Breast epithelium (tissue), 4 donors: ENCODE measurements at regions of chr9 and their contacts with region 1.

Region 1: DNA sequence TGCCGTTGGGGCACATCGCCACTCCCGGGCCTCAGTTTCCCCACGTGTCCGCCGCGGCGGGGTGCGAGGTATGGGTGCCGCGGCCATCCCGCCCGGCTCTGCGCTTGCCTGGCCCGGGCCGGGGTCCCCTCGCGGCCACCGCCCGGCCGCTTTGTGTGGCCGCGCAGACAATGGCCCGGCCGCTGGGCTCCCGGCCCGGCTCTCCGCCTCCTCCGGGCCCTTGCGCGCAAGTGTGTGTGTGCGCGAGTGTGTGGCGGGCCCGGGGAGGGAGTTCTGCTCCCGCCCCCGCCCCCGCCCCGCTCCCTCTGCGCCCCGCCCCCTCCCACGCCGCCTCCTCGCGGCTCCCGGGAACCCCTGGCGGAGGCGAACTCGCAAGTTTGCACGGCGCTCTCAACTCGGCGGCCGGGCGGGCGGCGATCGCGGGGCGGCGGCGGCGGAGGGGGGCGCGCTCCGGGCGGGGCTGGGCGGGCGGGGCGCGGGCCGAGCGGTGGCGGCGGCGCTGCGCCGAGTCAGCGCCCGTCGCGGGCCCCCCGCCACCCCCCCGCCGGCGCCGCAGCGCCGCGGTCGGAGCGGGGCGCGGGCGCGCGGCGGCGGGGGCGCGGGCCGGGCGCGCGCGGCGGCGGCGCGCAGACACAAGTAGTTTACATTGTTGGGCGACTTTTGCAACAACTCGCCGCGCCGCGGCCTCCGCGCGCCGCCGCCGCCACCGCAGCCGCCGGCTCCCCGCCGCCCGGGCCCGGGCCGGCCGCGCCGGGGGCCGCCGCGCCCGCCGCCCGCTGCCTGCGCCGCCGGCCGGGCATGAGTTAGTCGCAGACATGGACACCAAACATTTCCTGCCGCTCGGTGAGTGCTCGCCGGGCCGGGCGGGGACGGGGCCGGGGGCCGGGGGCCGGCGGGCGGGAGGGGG is at the start of gene RXRA:
- DNase-seq: peak; percentile 70 to 77
- H3K4me3 ChIP-seq: peak within 1 kb of the TSS; percentile 61 to 98 (median 80)
- H3K27ac ChIP-seq: peak within 1 kb of the TSS; percentile 96 to 99
- H3K4me1 ChIP-seq: peaks cover 20 to 21% of the 10 kb centered on the region in 2 donors
- H3K27me3 ChIP-seq: no peaks in the 10 kb centered on the region
- CTCF ChIP-seq: no peak
- POLR2A ChIP-seq: no peak
- total RNA-seq, gene RXRA: 31.0 to 63.0 (median 31.5) TPM

Region 2: GRCh38 chr9:134217832-134218629 is 108.0 kb before region 1 on chr9:
- intact Hi-C with region 1: loop called (anchors 5 kb)
- DNase-seq: no peak
- H3K4me3 ChIP-seq: no peak overlapping the region
- H3K27ac ChIP-seq: no peak overlapping the region
- H3K4me1 ChIP-seq: peaks cover 2 to 12% of the 10 kb centered on the region in 2 donors
- H3K27me3 ChIP-seq: no peaks in the 10 kb centered on the region
- CTCF ChIP-seq: peak in 1 of 3 donors; percentile 27
- POLR2A ChIP-seq: no peak

Region 3: DNA sequence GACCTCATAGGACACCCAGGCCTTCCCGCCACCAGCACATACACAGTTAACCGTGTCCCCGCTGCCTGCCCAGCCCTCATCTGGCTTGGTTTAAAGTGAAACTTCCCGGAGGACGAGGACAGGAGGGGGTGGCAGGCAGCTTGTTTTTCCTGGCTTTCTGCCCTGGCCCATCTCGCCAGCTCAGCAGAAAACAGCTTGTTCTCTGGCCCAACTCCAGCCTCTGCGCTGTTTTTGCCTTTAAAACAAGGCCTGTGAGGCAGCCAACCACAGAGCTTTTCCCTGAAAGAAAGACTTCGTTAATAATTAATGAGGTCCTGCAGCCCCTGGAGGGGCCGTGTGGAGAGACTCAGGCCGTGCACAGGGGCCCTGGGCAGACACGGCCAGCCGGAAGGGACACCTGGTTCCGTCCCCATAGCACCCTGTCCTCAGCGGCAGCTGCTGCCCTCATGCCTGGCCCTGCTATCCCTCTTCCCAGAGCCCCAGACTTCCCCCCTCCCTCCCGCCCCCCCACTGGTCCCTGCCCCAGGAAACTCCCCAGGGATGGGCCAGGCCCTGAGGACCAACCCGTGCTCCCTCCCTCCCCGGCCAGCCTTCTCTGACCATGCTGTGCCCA is 108.9 kb after region 1 on chr9:
- intact Hi-C with region 1: loop called (anchors 10 kb)
- DNase-seq: peak; percentile 94 to 96
- H3K4me3 ChIP-seq: peak overlapping the region in 2 of 3 donors; percentile 20 to 55
- H3K27ac ChIP-seq: peak overlapping the region; percentile 85 to 95
- H3K4me1 ChIP-seq: peaks cover 19 to 67% of the 10 kb centered on the region in 2 donors
- H3K27me3 ChIP-seq: no peaks in the 10 kb centered on the region
- CTCF ChIP-seq: no peak
- POLR2A ChIP-seq: no peak

Region 4: DNA sequence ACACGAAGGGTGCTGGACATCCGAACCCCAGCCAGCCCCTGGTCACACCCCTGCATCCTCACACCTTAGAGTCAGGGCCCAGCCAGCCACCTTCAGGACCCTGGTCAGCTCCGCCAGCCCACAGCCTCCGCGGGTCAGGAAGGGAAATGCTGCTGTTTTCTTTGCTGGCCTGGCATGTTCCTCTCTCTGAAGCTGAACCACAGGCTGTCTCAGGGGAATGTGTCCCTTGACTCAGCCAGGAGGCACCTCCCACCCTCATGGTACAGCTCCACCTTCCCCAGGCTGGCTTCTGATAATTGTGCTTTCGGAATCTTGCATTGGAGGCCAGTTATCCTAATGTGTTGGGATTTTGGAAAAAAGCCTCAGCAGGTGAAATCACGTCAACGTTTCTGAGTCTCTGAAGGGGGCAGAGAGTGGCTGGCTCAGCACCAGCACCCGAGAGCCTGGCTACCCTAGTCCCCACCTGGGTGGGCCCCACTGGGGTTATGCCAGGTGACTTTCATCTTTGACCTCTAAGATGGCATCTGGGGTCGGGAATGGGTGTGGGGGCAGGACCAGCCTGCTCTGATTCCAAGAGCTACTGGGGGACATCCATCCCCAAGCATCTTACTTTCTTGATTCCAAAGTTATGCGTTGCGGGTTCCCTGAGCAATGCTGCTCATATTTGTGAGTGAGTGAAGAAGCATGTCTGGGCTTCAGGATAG is 751.6 kb after region 1 on chr9:
- intact Hi-C with region 1: no loop called
- DNase-seq: peak in 1 of 2 donors; percentile 49
- H3K4me3 ChIP-seq: no peak overlapping the region
- H3K27ac ChIP-seq: no peak overlapping the region
- H3K4me1 ChIP-seq: no peaks in the 10 kb centered on the region
- H3K27me3 ChIP-seq: peaks cover 0 to 16% of the 10 kb centered on the region in 2 donors
- CTCF ChIP-seq: no peak
- POLR2A ChIP-seq: no peak